ENCODE measurements at regions of chr2 and their contacts with region 1.

Region 1: GRCh38 chr2:95022309-95023221 is 2.9 kb upstream of the MAL start:
- DNase-seq: peak; percentile 82
- H3K4me3 Mint-ChIP-seq: peak overlapping the region; percentile 73
- H3K27ac Mint-ChIP-seq: peak overlapping the region; percentile 85
- H3K4me1 Mint-ChIP-seq: peaks cover 41% of the 10 kb centered on the region
- H3K27me3 Mint-ChIP-seq: no peaks in the 10 kb centered on the region

Region 2: DNA sequence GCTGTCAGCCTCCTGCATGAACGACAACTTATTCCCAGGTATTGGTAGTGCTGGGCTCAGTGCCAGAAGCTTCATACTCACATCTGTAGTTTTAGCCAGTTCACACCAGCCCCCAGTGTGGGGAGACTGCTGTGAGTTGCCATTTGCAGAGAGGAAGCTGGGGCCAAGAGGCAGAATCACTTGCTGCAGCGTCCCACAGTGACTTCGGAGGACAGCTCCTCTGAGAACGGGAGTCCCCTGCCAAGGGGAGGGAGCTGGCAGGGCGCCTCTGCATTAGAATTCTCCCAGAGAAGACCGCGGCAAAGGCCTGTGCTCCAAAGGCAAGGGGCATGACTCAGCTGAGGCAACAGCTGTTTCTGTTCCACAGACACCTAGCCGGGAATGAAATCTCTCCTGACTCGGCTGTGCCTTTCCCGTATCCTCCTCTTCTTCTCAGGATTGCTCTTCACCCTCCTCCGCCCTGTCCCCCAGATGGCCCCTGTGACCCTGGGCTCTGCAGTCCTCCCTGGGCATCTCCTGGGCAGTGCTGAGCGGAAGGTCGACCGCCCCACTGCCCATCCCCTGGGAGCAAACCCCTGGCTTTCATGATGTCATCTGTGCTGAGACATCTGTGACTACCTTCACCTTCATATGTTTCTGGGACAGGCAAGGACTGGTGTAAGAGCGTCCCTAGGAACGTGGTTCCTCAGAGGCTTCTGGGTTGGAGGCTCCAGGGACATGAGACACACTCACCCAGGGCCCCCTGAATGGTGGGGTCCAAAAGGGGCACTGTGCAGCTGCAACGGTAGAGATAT is 20.9 kb after region 1 on chr2:
- intact Hi-C with region 1: loop called (anchors 1 kb)
- DNase-seq: no peak
- H3K4me3 Mint-ChIP-seq: peak overlapping the region; percentile 30
- H3K27ac Mint-ChIP-seq: peak overlapping the region; percentile 85
- H3K4me1 Mint-ChIP-seq: peaks cover 83% of the 10 kb centered on the region
- H3K27me3 Mint-ChIP-seq: no peaks in the 10 kb centered on the region

Region 3: DNA sequence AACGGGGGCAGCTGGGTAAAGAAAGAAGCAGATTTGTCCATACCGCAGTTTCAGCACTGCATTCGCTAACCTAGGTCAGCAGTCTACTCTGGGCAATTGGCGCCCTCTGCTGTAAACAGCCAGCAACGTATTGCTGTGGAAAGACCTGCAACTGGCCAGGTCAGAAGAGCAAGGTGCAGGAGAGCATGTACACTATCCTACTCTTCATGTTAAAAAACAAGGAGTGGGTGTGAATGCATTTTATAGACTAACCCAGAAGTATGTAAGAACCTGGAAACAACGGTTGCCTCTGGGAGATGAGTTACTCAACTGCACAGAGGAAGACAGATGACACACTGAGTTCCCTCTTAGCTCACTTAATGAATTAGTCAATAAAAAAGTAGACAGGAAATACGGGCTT is 92.9 kb after region 1 on chr2:
- intact Hi-C with region 1: loop called (anchors 1 kb)
- DNase-seq: peak; percentile 69
- H3K4me3 Mint-ChIP-seq: no peak overlapping the region
- H3K27ac Mint-ChIP-seq: no peak overlapping the region
- H3K4me1 Mint-ChIP-seq: peaks cover 47% of the 10 kb centered on the region
- H3K27me3 Mint-ChIP-seq: no peaks in the 10 kb centered on the region

Region 4: DNA sequence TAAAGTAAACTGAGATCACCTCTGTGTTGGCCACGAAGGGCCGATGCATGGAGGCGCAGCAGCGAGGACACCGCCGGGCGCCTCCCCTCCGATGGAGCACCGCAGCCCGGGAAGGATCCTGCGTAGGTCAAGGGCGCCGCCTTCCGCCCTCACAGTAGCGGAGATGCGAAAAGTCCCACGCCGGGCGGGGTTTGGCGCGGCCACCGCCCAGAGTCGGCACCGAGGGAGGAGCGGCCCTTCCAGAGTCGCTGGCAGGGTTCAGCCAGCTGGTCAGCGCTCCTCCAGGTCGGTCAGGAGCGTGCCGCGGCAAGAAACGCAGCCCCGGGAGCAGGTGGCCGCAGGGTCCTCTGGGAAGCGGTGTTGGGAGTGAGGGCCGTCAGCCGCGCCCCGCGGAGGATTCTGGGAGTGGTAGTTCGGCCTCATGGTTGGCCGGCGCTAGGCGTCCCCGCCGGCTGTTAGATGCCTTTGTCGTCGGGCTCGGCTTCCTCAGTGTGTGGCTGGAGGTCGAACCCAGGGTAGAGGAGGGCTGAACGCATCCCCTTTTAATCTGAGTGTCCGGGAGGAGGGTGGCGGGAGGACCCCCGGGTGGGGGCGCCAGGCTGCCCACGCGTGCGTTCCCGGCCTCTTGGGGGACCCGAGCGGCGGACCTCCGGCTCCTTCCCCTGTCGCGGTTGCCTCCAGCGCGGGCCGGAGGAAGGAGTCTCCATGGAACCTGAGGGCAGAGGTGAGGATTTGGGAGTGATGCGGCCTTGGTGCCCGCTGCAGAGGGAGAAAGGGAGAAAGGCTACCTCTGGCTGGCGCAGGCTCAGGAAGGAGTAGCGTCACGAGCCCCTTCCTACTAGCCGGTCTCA is 184.8 kb after region 1 on chr2 and contains the start of gene ZNF892:
- intact Hi-C with region 1: loop called (anchors 1 kb)
- DNase-seq: peak; percentile 74
- H3K4me3 Mint-ChIP-seq: peak within 1 kb of the TSS; percentile 90
- H3K27ac Mint-ChIP-seq: peak within 1 kb of the TSS; percentile 54
- H3K4me1 Mint-ChIP-seq: peaks cover 30% of the 10 kb centered on the region
- H3K27me3 Mint-ChIP-seq: no peaks in the 10 kb centered on the region
- total RNA-seq, gene ZNF892: 4.7 and 5.9 TPM in 2 replicates

Region 5: GRCh38 chr2:96602330-96602823 is 1579.8 kb after region 1 on chr2:
- intact Hi-C with region 1: no loop called
- DNase-seq: no peak
- H3K4me3 Mint-ChIP-seq: no peak overlapping the region
- H3K27ac Mint-ChIP-seq: peak overlapping the region; percentile 47
- H3K4me1 Mint-ChIP-seq: peaks cover 41% of the 10 kb centered on the region
- H3K27me3 Mint-ChIP-seq: no peaks in the 10 kb centered on the region

Measured in activated T-helper 1 cell treated with anti-CD3 and anti-CD28 coated beads, Interleukin-12 subunit alpha, Interleukin-12 subunit beta, Interleukin-2, Interleukin-4 antibody, amounts not matched to agents 30 ng/mL and 10 ng/mL and 1 ng/mL, durations not matched to agents 14 hours and 24 hours and 36 hours (primary cell).